Activated CD4-positive, alpha-beta T cell treated with anti-CD3 and anti-CD28 coated beads, Interleukin-2, amount 10 ng/mL, durations not matched to agents 24 days and 14 days (primary cell): ENCODE measurements at regions of chr1 and their contacts with region 1.

Region 1: DNA sequence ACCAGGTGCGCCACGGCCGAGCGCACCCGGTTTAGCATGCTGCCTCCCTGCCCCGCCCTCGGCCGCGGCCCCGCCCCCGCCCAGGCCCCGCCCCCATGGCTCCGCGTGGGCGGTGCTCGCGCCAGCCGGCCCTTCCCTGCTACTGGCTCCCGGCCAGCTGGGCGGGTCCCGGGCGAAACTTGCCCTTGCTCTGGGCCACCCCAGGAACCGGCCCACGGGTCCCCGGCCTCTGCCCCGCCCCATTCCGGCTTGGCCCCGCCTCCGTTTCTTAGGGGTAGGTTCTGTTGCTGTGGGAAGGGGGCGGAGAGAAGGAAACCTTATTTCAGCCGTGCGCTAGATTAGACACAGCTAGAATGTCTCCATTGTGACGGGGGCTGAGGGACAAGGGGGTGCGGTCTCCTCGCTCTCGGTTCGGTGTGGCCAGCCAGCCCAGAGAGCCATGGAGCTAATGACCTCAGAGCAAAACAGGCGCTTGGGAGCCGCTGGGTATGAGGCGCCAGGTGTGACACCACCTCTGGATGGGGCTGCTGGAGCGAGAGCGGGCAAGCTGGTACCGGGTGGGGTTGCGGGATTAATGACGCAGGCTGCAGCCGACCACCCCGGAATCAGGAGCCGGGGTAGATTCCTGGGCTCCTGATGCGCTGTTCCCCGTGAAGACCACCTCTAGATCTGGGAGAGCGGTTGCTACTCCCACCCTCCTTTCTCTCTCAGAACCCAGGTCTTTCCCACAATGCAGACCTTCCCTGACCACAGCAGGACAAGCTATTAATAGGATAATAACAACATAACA is at the start of gene PPM1J:
- DNase-seq: peak; percentile 100
- H3K4me3 Mint-ChIP-seq: peak within 1 kb of the TSS; percentile 89
- H3K27ac Mint-ChIP-seq: peak within 1 kb of the TSS; percentile 35
- H3K4me1 Mint-ChIP-seq: peaks cover 29% of the 10 kb centered on the region
- H3K27me3 Mint-ChIP-seq: peaks cover 41% of the 10 kb centered on the region
- total RNA-seq, gene PPM1J: 1.2 and 1.4 TPM in 2 replicates

Region 2: GRCh38 chr1:112674439-112674985 is 40.9 kb before region 1 on chr1 and contains the start of gene MOV10:
- intact Hi-C with region 1: loop called (anchors 2 kb)
- DNase-seq: peak; percentile 91
- H3K4me3 Mint-ChIP-seq: peak within 1 kb of the TSS; percentile 97
- H3K27ac Mint-ChIP-seq: peak within 1 kb of the TSS; percentile 98
- H3K4me1 Mint-ChIP-seq: peaks cover 38% of the 10 kb centered on the region
- H3K27me3 Mint-ChIP-seq: no peaks in the 10 kb centered on the region
- total RNA-seq, gene MOV10: 70.7 and 76.7 TPM in 2 replicates

Region 3: DNA sequence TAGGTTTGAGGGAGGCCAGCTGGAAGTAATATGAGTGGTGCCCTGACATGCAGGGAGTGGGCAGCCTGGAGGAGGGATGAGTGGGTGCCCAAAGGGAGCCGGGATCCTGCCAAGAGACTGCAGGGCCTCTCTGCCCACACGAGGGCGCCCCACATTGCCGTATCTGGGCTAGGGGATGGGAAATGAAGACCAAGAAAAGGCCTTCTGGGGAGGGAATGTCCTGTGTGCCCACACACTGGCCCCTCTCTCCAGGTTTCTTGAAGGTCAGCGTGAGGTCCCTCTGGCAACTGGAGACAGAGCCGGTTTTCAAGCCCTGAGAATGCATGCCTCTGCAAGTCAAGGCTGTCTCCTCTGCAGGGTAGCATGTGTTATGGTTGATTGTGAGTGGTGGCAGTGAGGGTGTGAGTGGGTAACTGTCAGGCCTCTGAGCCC is 93.8 kb after region 1 on chr1:
- intact Hi-C with region 1: loop called (anchors 1 kb)
- DNase-seq: peak; percentile 91
- H3K4me3 Mint-ChIP-seq: no peak overlapping the region
- H3K27ac Mint-ChIP-seq: no peak overlapping the region
- H3K4me1 Mint-ChIP-seq: peaks cover 2% of the 10 kb centered on the region
- H3K27me3 Mint-ChIP-seq: peaks cover 22% of the 10 kb centered on the region

Region 4: GRCh38 chr1:112872551-112872962 is 157.1 kb after region 1 on chr1:
- intact Hi-C with region 1: no loop called
- DNase-seq: no peak
- H3K4me3 Mint-ChIP-seq: no peak overlapping the region
- H3K27ac Mint-ChIP-seq: no peak overlapping the region
- H3K4me1 Mint-ChIP-seq: peaks cover 4% of the 10 kb centered on the region
- H3K27me3 Mint-ChIP-seq: peaks cover 15% of the 10 kb centered on the region

Region 5: DNA sequence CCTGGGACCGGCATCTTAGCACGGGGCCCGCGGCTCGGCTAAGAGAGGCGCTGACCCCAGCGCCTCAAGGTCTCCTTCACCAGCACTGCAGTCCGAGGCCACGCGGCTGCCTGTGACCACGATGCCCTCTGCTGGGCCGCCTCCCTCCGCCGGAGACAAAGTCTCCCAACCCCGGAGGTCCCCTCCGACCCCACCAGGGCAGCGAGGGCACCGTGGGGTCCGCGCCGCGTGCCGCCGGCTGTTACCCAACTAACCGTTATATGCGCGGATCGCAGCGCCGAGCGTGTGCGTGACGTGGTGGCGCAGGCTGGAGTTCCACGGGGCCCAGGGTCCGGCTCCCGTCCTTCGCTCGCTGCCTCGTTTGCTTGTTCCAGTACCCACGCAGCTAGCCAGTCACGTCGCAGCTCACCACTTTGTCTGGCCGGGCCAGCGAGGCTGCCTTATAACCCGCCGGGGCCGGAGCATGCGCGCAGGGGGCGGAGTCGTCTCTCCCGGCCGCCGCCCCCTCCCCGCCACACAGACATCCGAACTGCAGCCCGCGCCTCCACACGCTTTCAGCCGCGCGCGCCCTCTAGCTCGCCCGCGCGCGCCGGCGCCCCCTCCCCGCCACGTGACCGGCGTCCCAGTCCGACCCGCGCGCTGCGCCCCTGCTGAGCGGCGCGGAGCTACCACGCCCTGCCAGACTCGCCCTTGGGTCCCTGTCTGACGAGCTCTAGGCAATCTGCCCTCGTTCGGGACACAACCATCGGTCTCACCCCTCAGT is 240.5 kb after region 1 on chr1 and contains the start of gene SLC16A1:
- intact Hi-C with region 1: loop called (anchors 5 kb)
- DNase-seq: peak; percentile 97
- H3K4me3 Mint-ChIP-seq: peak within 1 kb of the TSS; percentile 88
- H3K27ac Mint-ChIP-seq: peak within 1 kb of the TSS; percentile 100
- H3K4me1 Mint-ChIP-seq: peaks cover 51% of the 10 kb centered on the region
- H3K27me3 Mint-ChIP-seq: no peaks in the 10 kb centered on the region
- total RNA-seq, gene SLC16A1: 79.2 and 79.7 TPM in 2 replicates